PC-3 (cell line): ENCODE measurements at regions of chr18 and their contacts with region 1.

Region 1: GRCh38 chr18:26813043-26813442 is 52.5 kb downstream of the AQP4 start:
- DNase-seq: peak; percentile 58
- ATAC-seq: peak; percentile 91
- H3K4me3 ChIP-seq: no peak overlapping the region
- H3K27ac ChIP-seq: no peak overlapping the region
- H3K4me1 ChIP-seq: no peaks in the 10 kb centered on the region
- H3K27me3 ChIP-seq: peaks cover 14% of the 10 kb centered on the region; the same call in 1 of the 2 replicates
- CTCF ChIP-seq: peak; percentile 69

Region 2: GRCh38 chr18:25125680-25126079 is 1687.4 kb before region 1 on chr18:
- CTCF ChIA-PET with region 1: no interaction called
- POLR2A ChIA-PET with region 1: no interaction called
- intact Hi-C with region 1: no loop called
- DNase-seq: no peak
- ATAC-seq: no peak
- H3K4me3 ChIP-seq: no peak overlapping the region
- H3K27ac ChIP-seq: no peak overlapping the region
- H3K4me1 ChIP-seq: no peaks in the 10 kb centered on the region
- H3K27me3 ChIP-seq: peaks cover 36% of the 10 kb centered on the region
- CTCF ChIP-seq: no peak

Region 3: DNA sequence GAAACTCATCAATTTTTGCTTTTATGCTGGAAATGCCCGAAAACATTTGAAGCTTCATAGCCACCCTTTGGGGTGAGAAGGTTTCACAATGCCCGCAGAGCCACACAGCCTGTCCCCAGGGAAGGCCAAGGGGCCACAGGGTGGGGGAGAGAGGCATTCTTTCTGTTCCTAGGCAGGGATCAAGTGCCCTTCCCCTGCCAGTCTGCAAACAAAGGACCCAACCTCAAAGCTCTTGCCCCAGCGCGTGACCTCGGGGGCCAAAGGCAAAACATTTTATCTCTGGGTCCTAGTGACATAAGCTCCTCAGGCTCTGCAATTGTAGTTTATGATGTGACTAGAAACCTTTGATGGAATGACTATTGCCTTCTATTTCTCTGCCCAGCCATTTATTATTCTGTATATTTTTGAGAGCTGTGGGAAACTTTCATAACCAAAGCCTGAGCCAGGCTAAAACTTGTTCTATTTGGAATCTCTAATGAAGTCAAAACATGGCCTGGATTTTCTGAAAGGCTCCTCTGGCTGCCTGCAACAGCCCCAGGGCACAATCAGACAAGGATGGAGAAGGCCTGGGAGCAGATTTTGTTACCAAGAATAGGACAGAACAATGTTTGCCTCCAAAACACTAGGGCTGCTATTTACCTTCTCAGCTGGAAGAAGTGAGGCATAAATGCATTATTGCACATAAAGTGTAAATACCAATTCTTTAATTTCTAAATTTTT is 127.4 kb before region 1 on chr18:
- CTCF ChIA-PET with region 1: no interaction called
- POLR2A ChIA-PET with region 1: no interaction called
- intact Hi-C with region 1: loop called (anchors 5 kb)
- DNase-seq: no peak
- ATAC-seq: no peak
- H3K4me3 ChIP-seq: no peak overlapping the region
- H3K27ac ChIP-seq: no peak overlapping the region
- H3K4me1 ChIP-seq: no peaks in the 10 kb centered on the region
- H3K27me3 ChIP-seq: peaks cover 69% of the 10 kb centered on the region
- CTCF ChIP-seq: no peak

Region 4: GRCh38 chr18:26963292-26963691 is 150.2 kb after region 1 on chr18:
- CTCF ChIA-PET with region 1: no interaction called
- POLR2A ChIA-PET with region 1: no interaction called
- intact Hi-C with region 1: loop called (anchors 1 kb)
- DNase-seq: peak; percentile 37
- ATAC-seq: peak; percentile 75
- H3K4me3 ChIP-seq: no peak overlapping the region
- H3K27ac ChIP-seq: no peak overlapping the region
- H3K4me1 ChIP-seq: no peaks in the 10 kb centered on the region
- H3K27me3 ChIP-seq: peaks cover 11% of the 10 kb centered on the region; the same call in 1 of the 2 replicates
- CTCF ChIP-seq: peak; percentile 50

Region 5: GRCh38 chr18:27005589-27005988 is 192.5 kb after region 1 on chr18:
- CTCF ChIA-PET with region 1: no interaction called
- POLR2A ChIA-PET with region 1: no interaction called
- intact Hi-C with region 1: loop called (anchors 1 kb)
- DNase-seq: peak; percentile 44
- ATAC-seq: peak; percentile 69
- H3K4me3 ChIP-seq: no peak overlapping the region
- H3K27ac ChIP-seq: no peak overlapping the region
- H3K4me1 ChIP-seq: no peaks in the 10 kb centered on the region
- H3K27me3 ChIP-seq: peaks cover 36% of the 10 kb centered on the region
- CTCF ChIP-seq: peak; percentile 62